Panc1 (cell line): ENCODE measurements at regions of chr2 and their contacts with region 1.

Region 1: GRCh38 chr2:221724631-221725203 is 152.6 kb upstream of the EPHA4 start:
- DNase-seq: no peak
- ATAC-seq: no peak
- H3K4me3 ChIP-seq: no peak overlapping the region
- H3K27ac ChIP-seq: no peak overlapping the region
- H3K4me1 ChIP-seq: no peaks in the 10 kb centered on the region
- H3K27me3 ChIP-seq: no peaks in the 10 kb centered on the region
- CTCF ChIP-seq: no peak

Region 2: GRCh38 chr2:221671515-221671914 is 53.2 kb before region 1 on chr2:
- CTCF ChIA-PET with region 1: no interaction called
- POLR2A ChIA-PET with region 1: no interaction called
- in situ Hi-C with region 1: no loop called
- intact Hi-C with region 1: no loop called
- DNase-seq: no peak
- ATAC-seq: no peak
- H3K4me3 ChIP-seq: no peak overlapping the region
- H3K27ac ChIP-seq: no peak overlapping the region
- H3K4me1 ChIP-seq: no peaks in the 10 kb centered on the region
- H3K27me3 ChIP-seq: no peaks in the 10 kb centered on the region
- CTCF ChIP-seq: no peak

Region 3: GRCh38 chr2:222424729-222425671 is 700.3 kb after region 1 on chr2:
- CTCF ChIA-PET with region 1: interaction called, 13 read pairs
- POLR2A ChIA-PET with region 1: no interaction called
- in situ Hi-C with region 1: no loop called
- intact Hi-C with region 1: no loop called
- DNase-seq: no peak
- ATAC-seq: peak; percentile 73
- H3K4me3 ChIP-seq: peak overlapping the region; percentile 21 to 36
- H3K27ac ChIP-seq: no peak overlapping the region
- H3K4me1 ChIP-seq: no peaks in the 10 kb centered on the region; the same call in 1 of the 2 replicates
- H3K27me3 ChIP-seq: peaks cover 25% of the 10 kb centered on the region
- CTCF ChIP-seq: no peak